Calu3 (cell line): ENCODE measurements at regions of chr22 and their contacts with region 1.

Region 1: DNA sequence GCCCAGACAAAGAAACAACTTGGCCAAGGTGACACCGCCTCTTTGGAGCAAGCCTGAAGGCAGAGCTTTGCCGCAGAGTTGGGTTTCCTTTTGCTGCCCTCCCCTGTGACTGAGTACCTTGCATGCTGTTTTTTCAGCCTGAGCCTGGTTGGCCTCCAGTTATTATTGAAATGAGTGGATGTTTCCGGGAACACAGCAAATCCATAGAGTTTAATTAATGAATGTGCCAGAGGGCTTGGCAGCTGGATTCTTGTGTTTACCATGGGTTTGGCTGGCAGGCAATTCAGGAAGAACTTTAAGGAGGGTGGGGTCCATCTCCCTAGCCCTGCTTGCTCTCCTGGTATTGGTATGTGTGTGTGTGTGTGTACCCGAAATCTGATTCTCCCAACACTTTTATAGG is 65.6 kb upstream of the CRYBB3 start:
- DNase-seq: peak; percentile 63
- H3K4me3 Mint-ChIP-seq: no peak overlapping the region
- H3K27ac Mint-ChIP-seq: peak overlapping the region; percentile 39
- H3K4me1 Mint-ChIP-seq: peaks cover 48% of the 10 kb centered on the region
- H3K27me3 Mint-ChIP-seq: no peaks in the 10 kb centered on the region
- CTCF ChIP-seq: no peak

Region 2: GRCh38 chr22:25120093-25120561 is 13.9 kb before region 1 on chr22:
- CTCF ChIA-PET with region 1: interaction called, 10 read pairs
- intact Hi-C with region 1: loop called (anchors 2 kb)
- DNase-seq: peak; percentile 91
- H3K4me3 Mint-ChIP-seq: peak overlapping the region; percentile 67
- H3K27ac Mint-ChIP-seq: peak overlapping the region; percentile 99
- H3K4me1 Mint-ChIP-seq: peaks cover 53% of the 10 kb centered on the region
- H3K27me3 Mint-ChIP-seq: no peaks in the 10 kb centered on the region
- CTCF ChIP-seq: no peak